Aorta (tissue), 5 donors: ENCODE measurements at regions of chr17 and their contacts with region 1.

Region 1: DNA sequence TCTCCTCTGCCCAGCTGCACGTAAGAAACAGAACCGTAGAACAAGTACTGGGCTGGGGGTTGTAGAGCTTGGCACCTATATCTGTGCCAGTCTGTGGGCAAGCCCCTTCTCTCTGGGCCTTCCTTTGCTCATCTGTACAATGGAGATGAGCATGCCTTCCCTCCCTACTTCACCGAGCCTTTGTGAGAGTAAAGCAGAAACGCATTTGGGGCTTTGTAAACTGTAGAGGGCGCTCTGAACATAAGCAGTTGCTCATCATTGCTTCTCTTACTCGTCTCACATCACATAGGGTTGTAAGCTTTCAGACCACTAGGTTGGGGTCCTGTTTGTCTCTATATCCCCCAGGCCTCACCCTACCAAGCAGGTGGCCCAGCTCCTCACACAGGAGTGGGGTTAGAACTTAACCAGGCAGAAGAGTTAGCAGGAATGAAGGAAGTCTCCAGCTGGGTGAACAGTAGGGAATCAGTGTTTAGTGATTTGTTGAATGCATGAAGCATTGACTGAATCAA is 15.1 kb downstream of the SAMD14 start:
- DNase-seq: no peak
- ATAC-seq: no peak
- H3K4me3 ChIP-seq: no peak overlapping the region
- H3K27ac ChIP-seq: no peak overlapping the region
- H3K4me1 ChIP-seq: peaks cover 0 to 4% of the 10 kb centered on the region in 2 donors
- H3K27me3 ChIP-seq: no peaks in the 10 kb centered on the region

Region 2: DNA sequence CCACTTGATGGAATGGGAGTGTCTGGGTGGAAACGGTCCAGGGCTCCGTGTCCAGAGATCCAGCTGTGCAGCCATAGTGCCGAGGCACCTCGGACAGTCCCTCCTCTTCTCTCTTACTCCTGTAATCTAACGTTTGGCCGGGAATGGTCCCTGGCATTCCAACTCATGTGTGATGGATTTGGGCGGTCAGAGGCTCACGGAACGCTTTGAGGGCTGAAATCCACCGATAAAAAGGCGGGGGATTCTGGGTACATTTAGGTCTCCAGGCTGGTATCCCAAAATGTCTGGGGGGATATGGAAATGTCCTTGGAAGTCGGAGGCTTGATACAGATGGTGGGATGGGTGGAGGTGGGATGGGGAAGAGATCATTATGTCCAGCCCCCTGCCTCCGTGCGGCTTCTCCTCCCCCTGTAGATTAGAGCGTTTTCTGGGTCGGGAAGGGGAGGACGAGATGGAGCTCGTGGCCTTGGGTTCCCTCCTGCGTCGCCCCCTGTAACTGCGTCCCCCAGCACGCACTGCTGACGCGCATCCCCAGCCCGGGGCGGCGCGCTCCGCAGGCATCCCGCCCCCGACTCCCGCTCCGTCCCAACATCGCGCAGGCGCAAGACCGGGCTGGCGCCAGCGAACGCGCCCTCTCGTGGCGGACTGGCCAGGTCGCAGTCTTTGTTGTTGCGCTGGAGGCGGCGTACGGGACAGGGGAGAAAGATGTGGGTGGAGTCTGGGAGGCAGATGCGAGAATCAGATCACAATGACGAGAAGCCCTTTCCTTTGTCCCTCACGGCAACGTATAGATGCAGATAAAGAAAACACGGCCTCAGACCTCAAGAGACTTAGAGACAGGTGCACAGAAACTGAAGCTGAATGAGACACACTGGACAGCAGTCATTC is 46.4 kb after region 1 on chr17:
- intact Hi-C with region 1: loop called (anchors 5 to 10 kb)
- DNase-seq: peak; percentile 94 to 98
- ATAC-seq: peak; percentile 95
- H3K4me3 ChIP-seq: peak overlapping the region; percentile 57 to 71
- H3K27ac ChIP-seq: peak overlapping the region in 1 of 2 donors; percentile 74
- H3K4me1 ChIP-seq: no peaks in the 10 kb centered on the region
- H3K27me3 ChIP-seq: no peaks in the 10 kb centered on the region

Region 3: GRCh38 chr17:50289991-50290702 is 175.2 kb after region 1 on chr17:
- intact Hi-C with region 1: loop called in 1 of 2 experiments (anchors 5 kb)
- DNase-seq: peak; percentile 90
- ATAC-seq: peak; percentile 95
- H3K4me3 ChIP-seq: peak overlapping the region; percentile 6 to 29
- H3K27ac ChIP-seq: peak overlapping the region; percentile 96
- H3K4me1 ChIP-seq: no peaks in the 10 kb centered on the region
- H3K27me3 ChIP-seq: no peaks in the 10 kb centered on the region